K562 (cell line): ENCODE measurements at regions of chr1 and their contacts with region 1.

Region 1: DNA sequence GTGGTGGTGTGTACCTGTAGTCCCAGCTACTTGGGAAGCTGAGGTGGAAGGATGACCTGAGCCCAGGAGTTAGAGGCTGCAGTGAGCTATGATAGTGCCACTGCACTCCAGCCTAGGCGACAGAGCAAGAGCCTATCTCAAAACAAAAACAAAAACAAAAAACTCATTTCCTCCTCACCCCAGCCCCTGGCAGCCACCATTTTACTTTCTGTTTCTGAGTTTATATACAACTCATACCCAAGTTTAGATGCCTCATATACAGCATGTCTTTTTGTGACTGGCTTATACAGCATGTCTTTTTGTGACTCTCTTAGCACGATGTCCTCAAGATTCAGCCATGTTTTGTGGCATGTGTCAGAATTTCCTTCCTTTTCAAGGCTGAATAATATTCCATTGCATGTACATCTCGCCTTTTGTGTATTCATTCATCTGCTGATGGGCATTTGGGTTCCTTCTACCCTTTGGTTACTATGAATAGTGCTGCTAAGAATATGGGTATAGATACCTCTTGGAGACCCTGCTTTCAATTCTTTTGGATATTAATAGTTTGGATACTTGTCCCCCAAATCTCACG is 14.7 kb downstream of the COA7 start:
- DNase-seq: no peak
- ATAC-seq: no peak
- H3K4me3 ChIP-seq: no peak overlapping the region
- H3K27ac ChIP-seq: no peak overlapping the region
- H3K4me1 ChIP-seq: no peaks in the 10 kb centered on the region; a peak in 1 of 5 replicates
- H3K27me3 ChIP-seq: no peaks in the 10 kb centered on the region; a peak in 1 of 5 replicates
- CTCF ChIP-seq: no peak
- EP300 ChIP-seq: no peak
- POLR2A ChIP-seq: peak; percentile 45; the same call in 1 of the 2 replicates
- RAD21 ChIP-seq: no peak

Region 2: GRCh38 chr1:52365746-52366516 is 317.5 kb before region 1 on chr1 and contains the start of gene CC2D1B:
- CTCF ChIA-PET with region 1: interaction called, 3 read pairs
- POLR2A ChIA-PET with region 1: no interaction called
- in situ Hi-C with region 1: no loop called
- intact Hi-C with region 1: loop called (anchors 2 kb)
- DNase-seq: peak; percentile 100
- ATAC-seq: peak; percentile 96
- H3K4me3 ChIP-seq: peak within 1 kb of the TSS; percentile 77
- H3K27ac ChIP-seq: peak within 1 kb of the TSS; percentile 93
- H3K4me1 ChIP-seq: peaks cover 21 to 37% of the 10 kb centered on the region in 2 experiments
- H3K27me3 ChIP-seq: no peaks in the 10 kb centered on the region
- CTCF ChIP-seq: peak in 2 of 3 experiments; percentile 21 to 27; a peak in 4 of 6 replicates
- EP300 ChIP-seq: peak; percentile 18; the same call in 1 of the 2 replicates
- POLR2A ChIP-seq: peak; percentile 93
- RAD21 ChIP-seq: peak in 1 of 2 experiments; percentile 15; a peak in 1 of 4 replicates
- polyA plus RNA-seq, gene CC2D1B: 1.2 to 1.5 TPM

Region 3: DNA sequence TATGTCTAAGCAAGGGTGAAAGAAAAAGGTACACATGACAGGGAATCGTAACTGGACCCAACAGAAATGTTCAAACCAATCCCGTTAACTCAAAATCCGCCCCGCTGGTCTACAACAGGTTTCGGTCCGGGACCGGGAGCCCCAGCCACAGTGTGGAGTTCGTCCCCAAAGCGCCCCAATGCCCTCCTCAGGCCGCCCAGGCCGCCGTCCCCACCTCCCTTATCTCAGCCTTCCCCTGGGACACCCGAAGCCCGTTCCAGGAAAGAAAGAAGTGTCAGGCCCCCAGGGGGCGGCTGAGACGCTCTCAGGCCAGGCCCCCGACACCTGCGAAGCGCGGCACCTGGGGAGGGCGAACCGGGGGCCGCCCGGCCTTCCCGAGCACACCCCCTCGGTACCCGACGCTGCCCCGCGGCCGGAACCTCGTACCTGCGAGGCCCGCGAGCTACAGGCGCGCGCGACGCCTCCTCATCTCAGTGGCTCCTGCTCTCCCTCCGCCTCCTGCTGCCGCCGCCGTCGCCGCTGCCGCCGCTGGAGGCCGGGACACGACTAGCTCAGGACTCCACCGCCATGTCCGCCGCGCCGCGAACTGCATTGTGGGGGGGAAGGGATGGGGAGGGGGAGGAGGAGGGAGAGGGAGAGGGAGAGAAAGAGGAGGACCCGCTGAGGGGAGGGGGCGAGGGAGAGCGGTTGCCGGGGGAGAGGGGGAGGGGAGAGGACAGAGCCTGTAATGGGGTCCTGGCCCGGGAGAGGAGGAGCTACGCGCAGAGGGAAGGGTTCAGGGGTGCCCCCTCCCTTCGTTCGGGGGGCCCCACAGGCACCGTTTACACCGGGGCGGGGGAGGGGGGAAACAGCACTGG is 130.7 kb before region 1 on chr1 and contains the start of gene TUT4:
- CTCF ChIA-PET with region 1: interaction called, 4 read pairs
- POLR2A ChIA-PET with region 1: interaction called, 3 read pairs
- in situ Hi-C with region 1: no loop called
- intact Hi-C with region 1: loop called (anchors 1 kb)
- DNase-seq: peak; percentile 78 to 92 (median 80)
- ATAC-seq: peak; percentile 85
- H3K4me3 ChIP-seq: peak within 1 kb of the TSS; percentile 77
- H3K27ac ChIP-seq: peak within 1 kb of the TSS; percentile 87
- H3K4me1 ChIP-seq: peaks cover 9 to 19% of the 10 kb centered on the region in 2 experiments; a peak in 3 of 5 replicates
- H3K27me3 ChIP-seq: no peaks in the 10 kb centered on the region
- CTCF ChIP-seq: peak in 1 of 3 experiments; percentile 38; a peak in 3 of 6 replicates
- EP300 ChIP-seq: no peak; the same call in 1 of the 2 replicates
- POLR2A ChIP-seq: peak; percentile 87
- RAD21 ChIP-seq: peak; percentile 46 to 53
- polyA plus RNA-seq, gene TUT4: 15.8 to 21.3 TPM

Region 4: DNA sequence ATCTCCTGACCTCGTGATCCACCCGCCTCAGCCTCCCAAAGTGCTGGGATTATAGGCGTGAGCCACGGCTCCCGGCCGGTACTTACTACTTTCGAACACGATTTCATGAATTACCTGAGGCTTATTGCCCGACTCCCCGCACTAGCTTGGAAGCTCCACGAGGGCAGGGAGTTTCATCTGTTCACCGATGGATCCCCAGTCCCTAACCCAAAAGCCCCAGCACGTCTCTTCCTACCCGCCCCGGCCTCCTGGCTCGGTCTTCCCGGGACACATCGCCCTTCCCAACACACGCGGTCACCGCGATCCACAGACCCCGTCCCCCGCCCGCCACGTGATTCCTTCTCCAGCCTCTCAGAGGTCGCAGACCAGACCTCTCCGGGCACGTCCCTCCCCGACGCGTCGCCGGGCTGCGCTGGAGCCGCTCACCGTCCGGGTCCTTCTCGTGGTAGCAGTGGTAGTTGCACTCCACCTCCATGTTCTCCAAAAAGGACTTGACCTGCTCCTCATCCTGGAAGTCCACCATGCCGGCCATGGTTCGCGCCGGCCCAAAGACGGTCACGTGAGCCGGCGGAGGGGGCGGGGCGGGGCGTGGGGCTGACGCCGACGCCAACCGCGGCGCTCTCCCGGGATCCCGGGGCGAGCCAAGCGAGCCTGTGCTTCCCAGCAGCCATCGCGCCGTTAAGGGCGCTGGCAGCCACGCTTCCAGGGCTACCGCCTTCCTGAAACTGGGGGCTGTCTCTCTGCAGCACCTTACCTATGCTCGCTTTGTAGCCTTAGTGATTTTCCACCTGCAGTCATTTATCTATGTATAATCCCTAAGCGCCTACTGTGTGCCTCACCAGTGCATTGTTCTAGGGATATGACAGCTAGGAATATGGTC is 14.6 kb after region 1 on chr1 and contains the start of gene COA7:
- CTCF ChIA-PET with region 1: interaction called, 3 read pairs
- POLR2A ChIA-PET with region 1: interaction called, 18 read pairs
- in situ Hi-C with region 1: no loop called
- intact Hi-C with region 1: no loop called
- DNase-seq: peak; percentile 93 to 96 (median 94)
- ATAC-seq: peak; percentile 90
- H3K4me3 ChIP-seq: peak within 1 kb of the TSS; percentile 82
- H3K27ac ChIP-seq: peak within 1 kb of the TSS; percentile 96
- H3K4me1 ChIP-seq: peaks cover 7 to 13% of the 10 kb centered on the region in 2 experiments; a peak in 4 of 5 replicates
- H3K27me3 ChIP-seq: no peaks in the 10 kb centered on the region
- CTCF ChIP-seq: no peak; a peak in 1 of 6 replicates
- EP300 ChIP-seq: no peak
- POLR2A ChIP-seq: peak; percentile 92
- RAD21 ChIP-seq: 0 out of 4 replicates have a peak, but pooled peaks of 1 of the 2 experiments have one; percentile 1
- polyA plus RNA-seq, gene COA7: 59.6 to 82.8 TPM

Region 5: GRCh38 chr1:53315456-53316423 is 632.3 kb after region 1 on chr1:
- CTCF ChIA-PET with region 1: no interaction called
- POLR2A ChIA-PET with region 1: no interaction called
- in situ Hi-C with region 1: no loop called
- intact Hi-C with region 1: no loop called
- DNase-seq: peak in 2 of 4 experiments; percentile 29 to 38
- ATAC-seq: peak; percentile 70
- H3K4me3 ChIP-seq: no peak overlapping the region
- H3K27ac ChIP-seq: no peak overlapping the region; the same call in 2 of the 3 replicates
- H3K4me1 ChIP-seq: peaks cover 0 to 30% of the 10 kb centered on the region in 2 experiments; a peak in 4 of 5 replicates
- H3K27me3 ChIP-seq: no peaks in the 10 kb centered on the region
- CTCF ChIP-seq: no peak
- EP300 ChIP-seq: no peak
- POLR2A ChIP-seq: no peak
- RAD21 ChIP-seq: no peak